ENCODE measurements at regions of chr22 and their contacts with region 1.

Region 1: GRCh38 chr22:46335201-46336118 is at the start of gene TRMU:
- DNase-seq: peak; percentile 56
- ATAC-seq: peak; percentile 97
- H3K4me3 ChIP-seq: peak within 1 kb of the TSS; percentile 98
- H3K27ac ChIP-seq: peak within 1 kb of the TSS; percentile 79
- H3K4me1 ChIP-seq: peaks cover 7% of the 10 kb centered on the region; the same call in 1 of the 2 replicates
- H3K27me3 ChIP-seq: no peaks in the 10 kb centered on the region
- CTCF ChIP-seq: no peak
- EP300 ChIP-seq: no peak
- POLR2A ChIP-seq: peak; percentile 95
- RAD21 ChIP-seq: no peak
- polyA plus RNA-seq, gene TRMU: 3.5 to 5.8 TPM

Region 2: GRCh38 chr22:46296257-46297150 is 39.0 kb before region 1 on chr22 and contains the start of gene GTSE1:
- CTCF ChIA-PET with region 1: no interaction called
- POLR2A ChIA-PET with region 1: interaction called, 4 read pairs
- RAD21 ChIA-PET with region 1: interaction called, 4 read pairs
- SMC1A ChIA-PET with region 1: interaction called, 5 read pairs
- in situ Hi-C with region 1: no loop called
- intact Hi-C with region 1: loop called (anchors 2 kb)
- DNase-seq: peak; percentile 96
- ATAC-seq: peak; percentile 97
- H3K4me3 ChIP-seq: peak within 1 kb of the TSS; percentile 100
- H3K27ac ChIP-seq: peak within 1 kb of the TSS; percentile 95
- H3K4me1 ChIP-seq: peaks cover 32% of the 10 kb centered on the region
- H3K27me3 ChIP-seq: no peaks in the 10 kb centered on the region
- CTCF ChIP-seq: peak in 2 of 3 experiments; percentile 27 to 59; a peak in 3 of 6 replicates
- EP300 ChIP-seq: no peak
- POLR2A ChIP-seq: peak; percentile 93
- RAD21 ChIP-seq: peak; percentile 49
- polyA plus RNA-seq, gene GTSE1: 6.6 to 10.0 TPM

Region 3: GRCh38 chr22:46617207-46617985 is 281.9 kb after region 1 on chr22:
- CTCF ChIA-PET with region 1: no interaction called
- POLR2A ChIA-PET with region 1: no interaction called
- RAD21 ChIA-PET with region 1: no interaction called
- SMC1A ChIA-PET with region 1: no interaction called
- in situ Hi-C with region 1: no loop called
- intact Hi-C with region 1: no loop called
- DNase-seq: no peak
- ATAC-seq: no peak
- H3K4me3 ChIP-seq: no peak overlapping the region
- H3K27ac ChIP-seq: no peak overlapping the region
- H3K4me1 ChIP-seq: peaks cover 16% of the 10 kb centered on the region
- H3K27me3 ChIP-seq: no peaks in the 10 kb centered on the region
- CTCF ChIP-seq: no peak
- EP300 ChIP-seq: no peak
- POLR2A ChIP-seq: no peak
- RAD21 ChIP-seq: no peak

Measured in GM12878 (cell line).